Colonic mucosa (tissue), 4 donors: ENCODE measurements at regions of chr6 and their contacts with region 1.

Region 1: GRCh38 chr6:161370880-161371279 is 97.0 kb upstream of the AGPAT4 start:
- DNase-seq: peak; percentile 62
- H3K4me3 ChIP-seq: no peak overlapping the region
- H3K27ac ChIP-seq: no peak overlapping the region
- H3K4me1 ChIP-seq: peaks cover 3% of the 10 kb centered on the region
- H3K27me3 ChIP-seq: no peaks in the 10 kb centered on the region
- CTCF ChIP-seq: peak; percentile 84

Region 2: GRCh38 chr6:160733050-160733646 is 637.7 kb before region 1 on chr6:
- intact Hi-C with region 1: loop called (anchors 2 kb)
- DNase-seq: peak; percentile 25
- H3K4me3 ChIP-seq: no peak overlapping the region
- H3K27ac ChIP-seq: no peak overlapping the region
- H3K4me1 ChIP-seq: no peaks in the 10 kb centered on the region
- H3K27me3 ChIP-seq: no peaks in the 10 kb centered on the region
- CTCF ChIP-seq: peak; percentile 47

Region 3: DNA sequence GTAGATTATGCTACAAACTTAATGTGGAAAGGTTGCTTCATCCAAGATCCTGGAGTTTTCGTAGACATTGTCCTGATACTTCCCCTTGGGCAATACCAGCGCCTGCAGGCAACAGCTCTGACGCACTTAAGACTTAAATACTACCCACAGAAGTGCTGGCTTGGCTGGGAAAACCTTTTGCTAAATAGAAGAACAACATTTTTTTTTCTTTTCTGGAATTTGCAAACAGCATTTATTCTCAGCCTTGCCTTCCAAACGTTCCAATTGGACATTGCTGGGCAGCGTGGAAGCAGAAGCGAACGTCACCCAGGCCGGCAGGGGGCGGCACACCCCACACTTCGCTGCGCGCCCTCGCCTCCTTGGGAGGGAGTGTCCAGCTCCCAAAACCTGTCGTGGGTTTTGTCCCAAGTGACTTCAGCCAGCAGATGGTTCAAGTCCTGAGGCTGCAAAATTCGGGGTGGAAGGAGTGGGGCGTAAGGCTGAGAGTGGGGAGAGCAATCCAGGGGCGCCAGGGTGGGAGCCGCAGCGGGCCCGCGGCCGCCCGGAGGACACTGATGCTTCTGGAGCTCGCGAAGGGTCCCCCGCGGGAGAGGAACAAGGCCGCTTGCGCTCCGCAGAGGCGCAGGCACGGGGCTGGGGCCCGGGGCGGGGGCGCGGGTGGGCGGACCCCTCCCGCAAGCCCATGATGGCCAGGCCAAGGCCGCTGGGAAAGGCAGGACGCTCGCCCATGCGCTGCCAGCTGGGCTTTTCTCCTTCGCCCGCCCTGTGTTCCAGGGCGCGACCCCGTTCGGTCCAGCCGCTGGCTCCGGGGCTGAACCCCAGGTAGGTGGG is 440.1 kb before region 1 on chr6:
- intact Hi-C with region 1: loop called (anchors 2 kb)
- DNase-seq: peak; percentile 75
- H3K4me3 ChIP-seq: peak overlapping the region; percentile 21
- H3K27ac ChIP-seq: no peak overlapping the region
- H3K4me1 ChIP-seq: no peaks in the 10 kb centered on the region
- H3K27me3 ChIP-seq: no peaks in the 10 kb centered on the region
- CTCF ChIP-seq: peak; percentile 75

Region 4: DNA sequence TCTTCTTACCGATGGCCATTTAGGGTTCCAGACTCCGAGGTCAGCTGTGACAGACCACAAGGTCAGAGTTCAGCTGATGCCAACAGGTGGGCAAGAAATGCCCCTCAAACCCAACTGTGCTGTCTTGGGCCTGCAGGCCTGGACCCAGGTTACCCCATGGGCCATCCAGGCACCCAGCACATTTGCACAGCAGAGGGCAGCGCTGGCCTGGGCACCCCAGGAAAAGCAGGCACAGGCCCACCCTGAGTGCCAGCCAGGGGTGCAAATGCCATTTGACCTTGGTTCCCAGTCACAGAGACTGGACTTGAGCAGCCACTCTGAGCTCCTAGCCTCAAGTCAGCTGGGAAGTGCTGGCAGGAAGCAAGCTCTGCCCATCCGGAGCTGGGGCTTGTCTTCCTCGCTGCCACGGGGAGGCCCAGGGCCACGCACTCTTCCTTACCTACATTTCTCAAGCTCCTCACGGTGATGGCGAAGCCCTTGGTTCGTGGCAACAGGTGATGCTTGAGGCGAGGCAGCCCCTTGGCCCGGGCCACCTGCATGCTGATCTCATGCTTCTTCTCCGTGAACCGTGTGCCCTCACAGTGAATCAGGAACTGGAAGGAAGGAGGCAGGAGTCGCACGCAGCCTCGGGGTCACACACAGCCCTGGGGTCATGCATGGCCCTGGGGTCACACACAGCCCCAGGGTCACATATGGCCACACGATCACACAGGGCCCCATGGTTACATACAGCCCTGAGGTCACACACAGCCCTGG is 217.8 kb before region 1 on chr6:
- intact Hi-C with region 1: loop called (anchors 5 kb)
- DNase-seq: no peak
- H3K4me3 ChIP-seq: no peak overlapping the region
- H3K27ac ChIP-seq: no peak overlapping the region
- H3K4me1 ChIP-seq: no peaks in the 10 kb centered on the region
- H3K27me3 ChIP-seq: no peaks in the 10 kb centered on the region
- CTCF ChIP-seq: peak; percentile 21

Region 5: GRCh38 chr6:161273752-161274487 is 97.0 kb before region 1 on chr6 and contains the start of gene AGPAT4:
- intact Hi-C with region 1: no loop called
- DNase-seq: peak; percentile 82
- H3K4me3 ChIP-seq: peak within 1 kb of the TSS; percentile 45
- H3K27ac ChIP-seq: peak within 1 kb of the TSS; percentile 33
- H3K4me1 ChIP-seq: no peaks in the 10 kb centered on the region
- H3K27me3 ChIP-seq: no peaks in the 10 kb centered on the region
- CTCF ChIP-seq: no peak
- total RNA-seq, gene AGPAT4: 3.6 to 9.2 TPM

Region 6: DNA sequence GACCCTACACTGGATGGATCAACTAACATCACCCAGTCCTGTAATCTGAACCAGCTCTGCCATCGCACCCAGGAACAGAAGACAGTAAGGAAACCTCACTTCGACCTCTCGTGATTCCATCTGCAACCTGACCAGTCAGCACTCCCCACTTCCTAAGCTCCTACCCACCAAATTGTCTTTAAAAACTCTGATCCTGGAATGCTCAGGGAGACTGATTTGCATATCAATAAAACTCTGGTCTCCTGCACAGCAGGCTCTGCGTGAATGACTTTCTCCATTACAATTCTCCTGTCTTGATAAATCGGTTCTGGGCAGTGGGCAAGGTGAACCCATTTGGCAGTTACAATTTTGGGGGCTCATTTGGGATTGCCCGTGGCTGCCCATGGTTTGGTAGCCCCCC is 78.7 kb before region 1 on chr6:
- intact Hi-C with region 1: no loop called
- DNase-seq: no peak
- H3K4me3 ChIP-seq: no peak overlapping the region
- H3K27ac ChIP-seq: no peak overlapping the region
- H3K4me1 ChIP-seq: no peaks in the 10 kb centered on the region
- H3K27me3 ChIP-seq: no peaks in the 10 kb centered on the region
- CTCF ChIP-seq: no peak

Region 7: GRCh38 chr6:162019349-162019748 is 648.5 kb after region 1 on chr6:
- intact Hi-C with region 1: no loop called
- DNase-seq: no peak
- H3K4me3 ChIP-seq: no peak overlapping the region
- H3K27ac ChIP-seq: no peak overlapping the region
- H3K4me1 ChIP-seq: no peaks in the 10 kb centered on the region
- H3K27me3 ChIP-seq: no peaks in the 10 kb centered on the region
- CTCF ChIP-seq: no peak